Left colon (tissue), 2 donors: ENCODE measurements at regions of chr15 and their contacts with region 1.

Region 1: GRCh38 chr15:75201609-75202250 is at the start of gene C15orf39:
- DNase-seq: peak; percentile 63 to 81
- ATAC-seq: peak; percentile 69
- total RNA-seq, gene C15orf39: 23.1 to 26.9 TPM

Region 2: DNA sequence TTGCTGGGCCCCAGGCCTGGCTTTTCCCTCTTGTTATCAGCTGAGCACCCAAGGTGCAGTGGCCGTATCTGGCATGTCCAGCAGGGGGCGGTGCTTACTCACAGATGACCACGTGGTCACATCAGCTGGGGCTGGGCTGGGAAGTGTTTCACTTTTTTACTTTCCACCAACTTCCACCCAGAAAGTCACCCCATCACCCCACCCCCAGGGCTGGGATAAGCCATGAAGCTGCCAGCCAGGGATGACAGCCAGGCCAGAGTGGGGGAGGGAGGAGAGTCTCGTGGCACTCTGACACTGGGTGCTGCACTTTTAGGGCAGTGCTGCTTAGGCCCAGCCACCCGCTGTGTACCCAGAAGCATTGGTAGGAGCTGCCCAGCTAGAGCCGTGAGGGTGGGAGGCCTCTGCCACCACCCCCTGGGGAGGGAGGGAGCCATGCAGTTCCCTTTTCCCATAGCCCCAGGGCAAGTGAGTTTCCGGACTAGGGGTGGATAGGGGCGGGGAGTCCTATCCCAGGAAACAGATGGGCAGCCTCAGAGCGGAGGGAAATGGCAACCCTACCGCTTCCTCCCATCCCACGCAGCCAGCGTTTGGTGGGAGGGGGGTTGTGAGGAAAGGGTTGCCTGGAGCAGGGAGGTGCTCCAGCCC is 172.2 kb before region 1 on chr15:
- intact Hi-C with region 1: loop called (anchors 2 to 5 kb)
- DNase-seq: peak; percentile 88 to 97
- ATAC-seq: peak; percentile 80

Region 3: DNA sequence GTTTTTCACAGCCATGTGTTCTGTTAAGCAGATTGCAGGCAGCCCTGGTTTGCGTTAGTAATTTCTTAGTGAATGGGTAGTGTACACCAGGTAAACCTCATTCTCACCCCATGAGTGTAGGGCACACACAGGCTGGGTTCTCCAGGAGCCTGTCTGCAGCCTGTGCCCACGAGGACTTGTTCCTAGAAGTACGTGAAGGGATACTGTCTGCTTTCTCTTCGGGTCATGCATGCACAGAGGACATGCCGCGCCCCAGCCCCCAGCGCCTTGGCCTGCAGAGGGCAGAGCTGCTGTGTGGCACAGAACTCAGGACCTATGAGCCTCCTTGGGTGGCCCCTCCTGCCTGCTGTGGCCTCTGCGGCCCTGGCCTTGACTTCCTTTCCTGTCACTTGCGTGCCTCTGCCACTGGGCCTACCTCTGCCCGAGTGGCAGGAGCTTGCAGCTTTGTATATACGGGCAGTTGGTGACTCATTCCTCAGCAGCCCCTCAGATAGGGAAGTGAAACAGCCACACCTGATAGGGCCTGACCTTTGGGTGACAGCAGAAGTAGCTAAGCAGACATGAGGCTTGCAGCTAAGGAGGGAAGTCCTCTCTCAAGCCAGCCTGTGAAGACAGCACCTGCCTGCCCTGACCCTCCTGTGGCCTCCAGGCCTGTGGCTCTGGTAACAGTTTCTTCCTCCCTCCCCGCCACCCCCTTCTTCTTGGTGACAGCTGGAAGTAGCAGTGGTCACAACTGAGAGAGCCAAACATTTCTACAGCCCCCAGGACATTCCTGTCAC is 158.8 kb before region 1 on chr15:
- intact Hi-C with region 1: loop called (anchors 5 kb)
- DNase-seq: peak; percentile 89 to 93
- ATAC-seq: peak; percentile 81

Region 4: DNA sequence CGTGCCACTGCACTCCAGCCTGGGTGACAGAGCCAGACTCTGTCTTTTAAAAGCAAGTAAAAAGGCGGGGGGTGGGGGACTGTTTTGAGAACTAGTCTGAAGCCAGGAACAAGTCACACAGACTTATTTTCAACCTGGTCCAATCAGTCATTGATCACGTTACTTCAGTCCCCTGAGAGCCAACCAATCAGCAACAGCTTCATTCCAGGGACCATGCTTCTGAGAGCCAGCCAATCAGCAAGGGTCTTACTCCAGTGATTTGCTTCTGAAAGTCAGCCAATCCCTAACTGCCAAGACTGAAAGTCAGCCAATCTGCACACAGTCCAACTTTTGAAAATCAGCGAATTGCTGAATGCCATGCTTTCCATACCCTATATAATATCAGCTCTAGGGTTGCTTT is 48.6 kb before region 1 on chr15:
- intact Hi-C with region 1: no loop called
- DNase-seq: no peak
- ATAC-seq: no peak